ENCODE measurements at regions of chr1 and their contacts with region 1.

Region 1: DNA sequence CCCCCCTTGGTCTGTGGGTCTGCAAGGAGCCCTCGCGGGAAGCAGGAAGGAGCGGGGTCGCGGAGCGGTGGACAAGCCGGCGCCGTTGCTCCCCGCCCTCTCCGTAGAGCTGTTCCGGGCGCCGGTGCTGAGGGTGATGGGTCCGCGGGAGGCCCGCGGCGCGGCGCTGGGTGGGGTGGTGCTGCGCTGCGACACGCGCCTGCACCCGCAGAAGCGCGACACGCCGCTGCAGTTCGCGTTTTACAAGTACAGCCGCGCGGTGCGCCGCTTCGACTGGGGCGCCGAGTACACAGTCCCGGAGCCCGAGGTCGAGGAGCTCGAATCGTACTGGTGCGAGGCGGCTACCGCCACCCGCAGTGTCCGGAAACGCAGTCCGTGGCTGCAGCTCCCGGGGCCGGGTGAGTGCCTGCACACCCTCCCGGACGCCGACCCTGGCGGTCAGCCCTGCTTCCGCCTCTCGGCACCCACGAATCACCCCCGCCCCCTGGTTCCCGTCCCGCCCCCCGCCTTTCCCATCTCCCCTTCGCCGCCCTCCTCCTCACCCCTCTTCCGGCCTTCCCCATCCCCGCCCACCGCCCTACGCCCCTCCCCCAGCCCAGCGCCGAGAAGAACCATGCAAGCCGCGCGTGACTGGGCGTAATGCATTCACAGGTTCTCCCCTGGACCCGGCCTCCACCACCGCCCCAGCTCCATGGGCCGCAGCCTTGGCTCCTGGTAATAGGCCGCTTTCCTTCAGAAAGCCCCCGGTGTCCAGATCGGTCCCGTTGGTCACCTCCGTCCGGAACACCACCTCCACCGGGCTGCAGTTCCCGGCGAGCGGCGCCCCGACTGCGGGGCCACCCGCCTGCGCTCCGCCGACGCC is 5.5 kb downstream of the FCRLB start:
- DNase-seq: peak; percentile 48 to 68 (median 64)
- ATAC-seq: peak; percentile 73
- H3K4me3 ChIP-seq: peak overlapping the region; percentile 93
- H3K4me3 Mint-ChIP-seq: peak overlapping the region; percentile 89 to 100 (median 99)
- H3K27ac ChIP-seq: peak overlapping the region; percentile 59
- H3K27ac Mint-ChIP-seq: peak overlapping the region in 6 of 9 donors; percentile 38 to 94 (median 72)
- H3K4me1 ChIP-seq: peaks cover 11 to 16% of the 10 kb centered on the region in 2 donors
- H3K4me1 Mint-ChIP-seq: peaks cover 30 to 51% (median 35%) of the 10 kb centered on the region in 7 donors
- H3K27me3 ChIP-seq: no peaks in the 10 kb centered on the region
- H3K27me3 Mint-ChIP-seq: peaks cover 0 to 76% (median 0%) of the 10 kb centered on the region in 5 donors

Region 2: GRCh38 chr1:161531986-161532643 is 194.7 kb before region 1 on chr1:
- CTCF ChIA-PET with region 1: no interaction called
- POLR2A ChIA-PET with region 1: interaction called, 9 read pairs
- intact Hi-C with region 1: loop called in 1 of 2 experiments (anchors 1 kb)
- DNase-seq: no peak
- ATAC-seq: no peak
- H3K4me3 ChIP-seq: no peak overlapping the region
- H3K4me3 Mint-ChIP-seq: peak overlapping the region in 9 of 10 donors; percentile 25 to 59 (median 50)
- H3K27ac ChIP-seq: no peak overlapping the region
- H3K27ac Mint-ChIP-seq: peak overlapping the region in 6 of 9 donors; percentile 10 to 80 (median 66)
- H3K4me1 ChIP-seq: peaks cover 10 to 11% of the 10 kb centered on the region in 2 donors
- H3K4me1 Mint-ChIP-seq: peaks cover 0 to 23% (median 19%) of the 10 kb centered on the region in 7 donors
- H3K27me3 ChIP-seq: no peaks in the 10 kb centered on the region
- H3K27me3 Mint-ChIP-seq: peaks cover 0 to 34% (median 0%) of the 10 kb centered on the region in 5 donors

Region 3: GRCh38 chr1:161681879-161682278 is 44.9 kb before region 1 on chr1:
- CTCF ChIA-PET with region 1: no interaction called
- POLR2A ChIA-PET with region 1: interaction called, 5 read pairs
- intact Hi-C with region 1: loop called in 1 of 2 experiments (anchors 5 kb)
- DNase-seq: no peak
- ATAC-seq: no peak
- H3K4me3 ChIP-seq: no peak overlapping the region
- H3K4me3 Mint-ChIP-seq: no peak overlapping the region
- H3K27ac ChIP-seq: no peak overlapping the region
- H3K27ac Mint-ChIP-seq: no peak overlapping the region
- H3K4me1 ChIP-seq: no peaks in the 10 kb centered on the region
- H3K4me1 Mint-ChIP-seq: no peaks in the 10 kb centered on the region
- H3K27me3 ChIP-seq: no peaks in the 10 kb centered on the region
- H3K27me3 Mint-ChIP-seq: peaks cover 13 to 55% (median 18%) of the 10 kb centered on the region in 5 donors

Region 4: DNA sequence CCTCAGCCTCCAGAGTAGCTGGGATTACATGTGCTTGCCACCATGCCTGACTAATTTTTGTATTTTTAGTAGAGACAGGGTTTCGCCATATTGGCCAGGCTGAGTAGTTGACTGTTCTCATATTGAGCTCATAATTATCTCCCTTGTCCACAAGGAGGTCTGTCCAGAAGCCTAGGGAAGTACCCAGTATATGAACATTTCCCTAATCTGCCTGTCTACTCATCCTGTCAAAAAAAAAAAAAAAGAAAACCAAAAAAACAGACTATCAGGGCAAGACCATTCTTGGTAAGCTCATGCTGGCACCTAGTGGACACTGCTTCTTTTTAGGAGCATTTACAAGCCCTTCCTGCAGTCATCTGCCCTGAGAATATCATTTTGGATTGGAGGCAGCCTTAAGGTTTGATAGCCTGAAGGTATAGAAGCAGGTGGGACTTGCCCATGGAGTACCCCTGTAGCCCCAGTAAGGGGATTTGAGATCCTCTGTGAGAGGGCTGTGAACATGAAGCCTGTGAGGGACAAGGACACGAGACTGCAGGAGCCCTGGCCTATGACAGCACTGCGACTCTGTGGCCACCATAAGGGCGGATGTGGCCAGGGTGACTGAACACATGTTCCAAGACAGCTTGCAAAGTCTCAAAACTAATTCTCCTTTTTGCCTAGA is 11.9 kb after region 1 on chr1:
- CTCF ChIA-PET with region 1: interaction called, 36 read pairs
- POLR2A ChIA-PET with region 1: interaction called, 60 read pairs
- intact Hi-C with region 1: loop called (anchors 1 kb)
- DNase-seq: peak in 8 of 9 donors; percentile 17 to 55 (median 47)
- ATAC-seq: peak; percentile 83
- H3K4me3 ChIP-seq: no peak overlapping the region
- H3K4me3 Mint-ChIP-seq: peak overlapping the region in 1 of 10 donors; percentile 28
- H3K27ac ChIP-seq: no peak overlapping the region
- H3K27ac Mint-ChIP-seq: peak overlapping the region in 1 of 9 donors; percentile 74
- H3K4me1 ChIP-seq: peaks cover 4 to 25% of the 10 kb centered on the region in 2 donors
- H3K4me1 Mint-ChIP-seq: peaks cover 0 to 42% (median 18%) of the 10 kb centered on the region in 7 donors
- H3K27me3 ChIP-seq: no peaks in the 10 kb centered on the region
- H3K27me3 Mint-ChIP-seq: peaks cover 0 to 36% (median 5%) of the 10 kb centered on the region in 5 donors

Region 5: DNA sequence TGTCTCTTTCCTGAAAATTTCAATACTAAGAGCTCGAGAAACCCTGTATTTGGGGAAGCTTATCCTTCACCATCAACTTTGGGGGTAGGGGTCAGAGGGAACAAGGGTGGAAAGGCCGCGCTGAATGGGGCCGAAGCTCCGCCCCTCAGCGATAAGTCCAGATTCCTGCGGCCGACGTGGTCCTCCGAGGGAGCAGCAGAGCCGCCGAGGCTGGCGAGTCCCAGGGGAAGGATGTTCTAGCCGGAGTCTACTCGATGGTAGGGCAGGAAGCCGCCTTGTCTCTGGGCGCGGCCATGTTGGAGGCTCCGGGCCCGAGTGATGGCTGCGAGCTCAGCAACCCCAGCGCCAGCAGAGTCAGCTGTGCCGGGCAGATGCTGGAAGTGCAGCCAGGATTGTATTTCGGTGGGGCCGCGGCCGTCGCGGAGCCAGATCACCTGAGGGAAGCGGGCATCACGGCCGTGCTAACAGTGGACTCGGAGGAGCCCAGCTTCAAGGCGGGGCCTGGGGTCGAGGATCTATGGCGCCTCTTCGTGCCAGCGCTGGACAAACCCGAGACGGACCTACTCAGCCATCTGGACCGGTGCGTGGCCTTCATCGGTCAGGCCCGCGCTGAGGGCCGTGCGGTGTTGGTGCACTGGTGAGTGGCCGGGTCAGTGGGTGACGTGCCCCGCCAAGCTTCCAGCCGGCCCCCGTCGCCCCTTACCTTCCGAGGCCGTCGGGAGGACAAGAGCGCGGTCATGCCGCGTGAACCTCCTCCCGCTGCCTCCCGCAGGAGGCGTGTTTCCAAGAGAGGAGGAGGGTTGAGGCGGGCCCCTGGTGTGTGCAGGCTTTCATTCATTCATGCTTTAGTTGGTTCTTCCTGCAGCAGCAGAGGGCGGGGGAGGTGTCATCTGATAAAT is 22.9 kb after region 1 on chr1 and contains the start of gene DUSP12:
- CTCF ChIA-PET with region 1: interaction called, 4 read pairs
- POLR2A ChIA-PET with region 1: interaction called, 36 read pairs
- intact Hi-C with region 1: loop called (anchors 1 kb)
- DNase-seq: peak; percentile 69 to 86 (median 83)
- ATAC-seq: peak; percentile 99
- H3K4me3 ChIP-seq: peak within 1 kb of the TSS; percentile 86
- H3K4me3 Mint-ChIP-seq: peak within 1 kb of the TSS; percentile 96 to 100 (median 99)
- H3K27ac ChIP-seq: peak within 1 kb of the TSS; percentile 74
- H3K27ac Mint-ChIP-seq: peak within 1 kb of the TSS; percentile 83 to 99 (median 96)
- H3K4me1 ChIP-seq: peaks cover 10 to 12% of the 10 kb centered on the region in 2 donors
- H3K4me1 Mint-ChIP-seq: peaks cover 32 to 50% (median 43%) of the 10 kb centered on the region in 7 donors
- H3K27me3 ChIP-seq: no peaks in the 10 kb centered on the region
- H3K27me3 Mint-ChIP-seq: peaks cover 0 to 24% (median 5%) of the 10 kb centered on the region in 5 donors
- total RNA-seq, gene DUSP12: 16.1 to 31.4 (median 24.1) TPM

Region 6: GRCh38 chr1:161885003-161885402 is 158.2 kb after region 1 on chr1:
- CTCF ChIA-PET with region 1: no interaction called
- POLR2A ChIA-PET with region 1: no interaction called
- intact Hi-C with region 1: no loop called
- DNase-seq: no peak
- ATAC-seq: no peak
- H3K4me3 ChIP-seq: no peak overlapping the region
- H3K4me3 Mint-ChIP-seq: no peak overlapping the region
- H3K27ac ChIP-seq: no peak overlapping the region
- H3K27ac Mint-ChIP-seq: peak overlapping the region in 1 of 9 donors; percentile 31
- H3K4me1 ChIP-seq: no peaks in the 10 kb centered on the region
- H3K4me1 Mint-ChIP-seq: peaks cover 0 to 11% (median 1%) of the 10 kb centered on the region in 7 donors
- H3K27me3 ChIP-seq: no peaks in the 10 kb centered on the region
- H3K27me3 Mint-ChIP-seq: no peaks in the 10 kb centered on the region

Region 7: DNA sequence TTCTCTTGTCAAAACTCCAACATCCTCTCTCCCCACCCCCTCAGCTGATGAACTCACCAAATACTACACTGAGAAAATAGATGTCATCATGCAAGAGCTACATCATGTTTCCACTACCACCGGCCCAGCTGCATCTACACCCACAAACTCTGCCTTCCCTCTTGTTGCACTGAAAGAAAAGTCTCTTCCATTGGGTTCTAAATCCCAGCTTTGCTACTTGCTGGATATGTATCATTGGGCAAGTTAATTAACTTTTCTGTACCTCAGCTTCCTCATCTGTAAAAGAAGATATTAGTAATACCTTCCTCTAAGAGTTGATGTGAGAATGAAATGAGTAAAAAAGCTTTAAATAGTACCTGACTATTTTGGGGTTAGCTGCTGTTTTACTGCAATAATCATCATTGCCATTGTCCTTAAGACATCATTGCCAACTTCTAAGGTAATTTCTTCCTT is 188.2 kb after region 1 on chr1:
- CTCF ChIA-PET with region 1: no interaction called
- POLR2A ChIA-PET with region 1: no interaction called
- intact Hi-C with region 1: no loop called
- DNase-seq: no peak
- ATAC-seq: no peak
- H3K4me3 ChIP-seq: no peak overlapping the region
- H3K4me3 Mint-ChIP-seq: no peak overlapping the region
- H3K27ac ChIP-seq: no peak overlapping the region
- H3K27ac Mint-ChIP-seq: no peak overlapping the region
- H3K4me1 ChIP-seq: peaks cover 15% of the 10 kb centered on the region in 2 donors
- H3K4me1 Mint-ChIP-seq: peaks cover 4 to 43% (median 35%) of the 10 kb centered on the region in 7 donors
- H3K27me3 ChIP-seq: no peaks in the 10 kb centered on the region
- H3K27me3 Mint-ChIP-seq: no peaks in the 10 kb centered on the region

Measured in naive thymus-derived CD4-positive, alpha-beta T cell (primary cell).